ENCODE measurements at regions of chr14 and their contacts with region 1.

Region 1: GRCh38 chr14:93857500-93858283 is 69.4 kb upstream of the PRIMA1 start:
- DNase-seq: no peak
- H3K4me3 ChIP-seq: no peak overlapping the region
- H3K27ac ChIP-seq: no peak overlapping the region
- H3K4me1 ChIP-seq: peaks cover 0 to 38% (median 15%) of the 10 kb centered on the region in 4 donors
- H3K27me3 ChIP-seq: no peaks in the 10 kb centered on the region
- CTCF ChIP-seq: no peak

Region 2: DNA sequence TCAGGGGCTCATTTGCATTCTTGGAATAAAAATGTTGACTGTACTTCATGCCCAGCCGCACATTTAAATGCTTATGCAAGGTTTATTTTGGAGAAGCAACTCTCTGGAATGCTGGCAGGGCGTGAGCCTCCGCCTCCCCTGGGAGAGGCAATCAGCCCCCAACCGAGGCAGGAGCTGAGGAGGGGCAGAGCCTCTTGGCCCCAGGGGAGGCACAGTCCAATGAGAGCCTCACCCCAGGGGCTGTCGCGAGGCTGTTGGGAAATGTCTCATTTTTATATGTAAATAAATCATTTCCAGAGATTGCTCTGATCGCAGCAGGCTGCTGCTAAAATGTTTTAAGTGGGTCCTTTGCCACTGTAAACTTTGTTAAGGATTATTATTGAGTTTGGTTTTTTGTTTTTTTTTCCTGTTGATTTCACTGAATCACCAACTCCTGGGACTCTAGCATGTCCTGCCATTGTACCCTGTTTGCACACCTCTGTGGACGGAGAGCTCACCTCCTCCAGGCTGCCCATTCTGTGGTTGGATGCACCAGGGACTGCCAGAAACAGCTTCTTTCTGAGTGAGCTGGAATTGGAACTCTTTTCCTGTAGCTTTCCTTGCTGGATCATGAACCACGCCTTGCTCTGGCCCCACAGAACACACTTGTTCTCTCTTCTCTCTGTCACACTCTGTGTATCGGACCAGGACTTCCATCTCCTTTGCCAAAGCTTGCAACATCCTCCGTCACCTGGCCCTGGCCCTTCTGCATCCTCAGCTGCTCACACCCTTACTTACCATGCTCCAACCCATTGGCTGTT is 22.5 kb after region 1 on chr14:
- intact Hi-C with region 1: loop called (anchors 1 kb)
- DNase-seq: peak; percentile 52 to 82
- H3K4me3 ChIP-seq: peak overlapping the region; percentile 35 to 36
- H3K27ac ChIP-seq: peak overlapping the region; percentile 9 to 54
- H3K4me1 ChIP-seq: peaks cover 0 to 26% (median 15%) of the 10 kb centered on the region in 4 donors
- H3K27me3 ChIP-seq: no peaks in the 10 kb centered on the region
- CTCF ChIP-seq: no peak

Region 3: DNA sequence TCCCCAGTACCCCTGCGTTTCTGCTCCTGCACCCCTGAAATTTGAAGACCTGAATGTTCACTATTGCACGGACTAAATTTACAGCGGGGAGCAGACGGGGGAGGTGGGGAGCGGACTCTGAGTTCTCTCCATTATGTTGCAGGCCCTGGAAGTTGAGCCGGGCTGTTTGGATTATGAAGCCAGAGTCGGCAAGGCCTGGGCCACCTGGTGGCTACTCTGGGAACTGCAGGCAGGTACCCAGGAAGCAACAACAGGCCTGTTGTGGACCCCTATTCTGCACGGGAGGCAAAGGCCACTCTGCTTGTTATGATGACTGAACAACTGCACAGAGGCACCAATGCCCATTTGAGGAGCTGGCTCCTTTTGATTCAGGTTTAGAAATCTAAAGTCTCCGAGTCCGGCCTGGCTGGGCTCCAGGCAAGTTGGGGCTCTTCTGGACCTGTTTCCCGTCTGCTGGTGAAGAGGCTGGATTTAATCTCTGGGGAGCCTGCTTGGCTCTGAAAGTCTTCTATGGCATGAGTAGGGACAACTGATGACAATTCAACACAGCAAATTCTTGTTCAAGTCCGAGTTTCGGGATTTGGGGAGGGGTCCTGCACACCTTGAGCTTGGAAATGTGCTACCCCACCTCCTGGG is 35.3 kb after region 1 on chr14:
- intact Hi-C with region 1: no loop called
- DNase-seq: peak; percentile 75 to 82
- H3K4me3 ChIP-seq: peak overlapping the region in 1 of 2 donors; percentile 25
- H3K27ac ChIP-seq: peak overlapping the region in 1 of 2 donors; percentile 3
- H3K4me1 ChIP-seq: peaks cover 0 to 19% (median 12%) of the 10 kb centered on the region in 4 donors
- H3K27me3 ChIP-seq: no peaks in the 10 kb centered on the region
- CTCF ChIP-seq: peak; percentile 94 to 99

Region 4: DNA sequence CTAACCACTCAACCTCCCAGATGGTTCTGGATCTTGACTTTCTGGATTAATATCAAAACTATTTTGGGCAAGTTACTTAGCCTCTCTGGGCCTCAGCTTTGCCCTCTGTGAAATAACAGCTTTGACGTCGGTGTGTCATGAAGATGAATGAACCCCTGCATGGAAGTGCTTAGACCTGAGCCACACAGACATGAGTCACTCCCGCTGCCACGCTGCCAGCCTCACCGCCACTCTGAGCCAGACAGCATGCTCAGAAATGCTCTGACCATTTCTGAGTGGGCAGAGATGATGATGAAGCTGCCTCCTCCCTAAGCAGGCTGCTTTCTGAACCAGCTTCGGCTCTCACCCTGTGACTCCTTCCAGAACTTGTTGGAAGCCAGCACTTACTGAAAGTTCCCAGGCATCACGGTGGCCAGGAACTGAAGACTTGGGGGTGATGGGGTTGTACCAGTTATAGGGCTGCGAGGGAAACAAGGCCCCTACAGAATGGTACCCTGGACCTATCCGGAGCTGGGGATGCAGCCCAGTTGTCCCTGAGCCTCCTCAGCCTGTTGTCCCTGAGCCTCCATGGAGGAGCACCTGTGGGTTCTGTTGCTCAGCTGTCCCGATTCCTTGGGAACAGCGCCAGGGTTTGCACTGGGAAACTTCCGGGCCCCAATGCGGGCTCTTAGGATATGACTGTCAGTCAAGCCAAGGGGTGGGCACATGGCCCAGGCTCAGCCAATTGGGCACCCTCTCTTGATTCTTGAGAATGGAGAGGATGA is 137.4 kb after region 1 on chr14:
- intact Hi-C with region 1: no loop called
- DNase-seq: peak; percentile 62 to 94
- H3K4me3 ChIP-seq: peak overlapping the region; percentile 21 to 41
- H3K27ac ChIP-seq: peak overlapping the region; percentile 82 to 91
- H3K4me1 ChIP-seq: peaks cover 0 to 30% (median 23%) of the 10 kb centered on the region in 4 donors
- H3K27me3 ChIP-seq: no peaks in the 10 kb centered on the region
- CTCF ChIP-seq: no peak